Activated T-helper 1 cell treated with anti-CD3 and anti-CD28 coated beads, Interleukin-12 subunit alpha, Interleukin-12 subunit beta, Interleukin-2, Interleukin-4 antibody, amounts not matched to agents 30 ng/mL and 10 ng/mL and 1 ng/mL, durations not matched to agents 14 hours and 24 hours and 36 hours (primary cell): ENCODE measurements at regions of chr11 and their contacts with region 1.

Region 1: GRCh38 chr11:69101115-69101791 is 52.5 kb downstream of the TPCN2 start:
- DNase-seq: peak; percentile 53
- H3K4me3 Mint-ChIP-seq: no peak overlapping the region
- H3K27ac Mint-ChIP-seq: no peak overlapping the region
- H3K4me1 Mint-ChIP-seq: no peaks in the 10 kb centered on the region
- H3K27me3 Mint-ChIP-seq: no peaks in the 10 kb centered on the region

Region 2: DNA sequence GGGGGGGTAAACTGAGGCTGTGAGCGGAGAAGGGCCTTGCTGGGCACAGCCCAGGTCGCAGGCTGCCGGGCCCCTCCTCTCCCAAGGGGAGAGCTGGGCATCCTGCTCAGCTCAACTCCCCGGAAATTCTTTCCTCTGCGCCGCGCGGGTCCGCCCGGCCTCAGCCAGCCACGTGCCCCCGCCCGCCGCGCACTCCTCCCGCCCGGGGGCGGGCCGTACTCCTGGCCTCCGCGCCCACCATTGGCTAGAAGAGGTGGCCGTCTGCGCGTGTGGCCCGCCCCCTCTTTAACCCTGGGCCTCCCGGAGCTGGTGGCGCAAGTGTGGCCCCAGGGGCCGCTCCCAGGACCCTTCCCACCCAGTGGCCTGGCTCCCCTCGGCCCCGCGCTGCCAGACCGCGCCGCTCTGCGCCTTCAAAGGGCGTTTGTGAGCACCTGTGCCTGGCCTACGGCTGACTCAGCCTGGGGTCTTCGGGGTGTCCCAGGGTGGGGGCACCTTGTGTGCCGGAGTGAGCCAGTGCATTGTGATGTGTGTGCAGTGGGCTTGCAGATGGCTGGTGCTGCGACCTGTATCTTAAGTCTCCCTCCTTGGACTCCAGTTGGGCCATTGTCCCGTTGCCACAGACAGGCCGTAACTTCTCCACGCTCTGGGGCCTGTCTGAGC is 90.2 kb before region 1 on chr11:
- intact Hi-C with region 1: no loop called
- DNase-seq: peak; percentile 6
- H3K4me3 Mint-ChIP-seq: no peak overlapping the region
- H3K27ac Mint-ChIP-seq: no peak overlapping the region
- H3K4me1 Mint-ChIP-seq: no peaks in the 10 kb centered on the region
- H3K27me3 Mint-ChIP-seq: peaks cover 17% of the 10 kb centered on the region

Region 3: GRCh38 chr11:69166218-69167115 is 65.2 kb after region 1 on chr11:
- intact Hi-C with region 1: loop called (anchors 2 kb)
- DNase-seq: peak; percentile 17
- H3K4me3 Mint-ChIP-seq: peak overlapping the region; percentile 67
- H3K27ac Mint-ChIP-seq: peak overlapping the region; percentile 90
- H3K4me1 Mint-ChIP-seq: peaks cover 24% of the 10 kb centered on the region
- H3K27me3 Mint-ChIP-seq: peaks cover 2% of the 10 kb centered on the region

Region 4: DNA sequence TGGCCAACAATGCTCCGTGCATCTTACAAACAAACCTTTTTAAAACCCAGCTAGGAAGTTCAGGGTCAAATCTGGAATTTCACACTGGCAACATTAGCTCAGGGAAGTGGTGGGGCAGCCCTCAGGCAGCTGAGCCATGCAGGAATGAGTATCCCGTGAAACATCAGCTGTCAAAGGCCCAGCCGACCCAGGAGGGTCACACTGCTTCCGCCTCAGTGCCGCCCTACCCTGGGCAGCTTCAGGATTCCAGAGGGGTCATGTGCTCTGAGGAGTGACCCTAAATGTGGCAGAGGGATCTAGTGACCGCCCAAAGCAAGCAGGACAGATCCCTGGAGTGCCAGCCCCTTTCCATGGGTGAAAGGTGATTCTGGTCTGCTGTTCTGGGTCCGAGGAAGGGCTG is 453.6 kb after region 1 on chr11:
- intact Hi-C with region 1: loop called (anchors 5 kb)
- DNase-seq: no peak
- H3K4me3 Mint-ChIP-seq: no peak overlapping the region
- H3K27ac Mint-ChIP-seq: no peak overlapping the region
- H3K4me1 Mint-ChIP-seq: peaks cover 18% of the 10 kb centered on the region
- H3K27me3 Mint-ChIP-seq: peaks cover 6% of the 10 kb centered on the region

Region 5: DNA sequence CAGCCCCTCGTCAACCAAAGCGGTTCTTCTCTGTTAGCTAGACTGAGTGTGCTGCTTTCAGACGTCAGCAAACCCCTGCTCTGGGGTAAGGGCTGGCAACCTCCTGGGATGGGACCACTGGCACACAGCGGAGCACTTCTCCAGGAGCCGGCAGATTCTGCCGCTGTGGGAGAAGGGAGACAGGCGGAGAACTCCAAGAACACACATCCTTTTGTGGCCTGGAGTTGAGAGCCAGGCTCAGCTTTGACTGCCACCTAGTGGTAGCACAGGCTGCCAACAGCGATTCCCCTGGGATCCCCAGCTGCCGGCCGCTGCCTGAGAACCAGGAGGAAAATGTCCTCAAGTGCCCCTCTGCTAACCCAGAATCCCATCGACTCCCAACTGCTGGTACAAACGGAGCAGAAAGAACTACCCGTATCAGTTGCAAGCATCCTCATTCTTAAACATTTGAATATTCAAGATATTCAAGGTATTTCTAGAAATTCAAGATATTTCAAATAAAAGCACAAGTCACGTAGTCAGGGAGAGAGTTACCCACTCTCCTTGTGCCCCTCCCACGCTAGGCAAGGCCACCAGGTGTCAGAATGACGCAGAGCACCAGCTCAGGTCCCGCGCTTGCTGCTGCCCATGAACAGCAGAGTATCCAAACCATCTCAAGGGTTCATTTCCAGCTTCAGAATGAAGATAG is 569.0 kb after region 1 on chr11:
- intact Hi-C with region 1: loop called (anchors 1 kb)
- DNase-seq: peak; percentile 14
- H3K4me3 Mint-ChIP-seq: no peak overlapping the region
- H3K27ac Mint-ChIP-seq: no peak overlapping the region
- H3K4me1 Mint-ChIP-seq: peaks cover 24% of the 10 kb centered on the region
- H3K27me3 Mint-ChIP-seq: no peaks in the 10 kb centered on the region